Endothelial cell of umbilical vein (primary cell): ENCODE measurements at regions of chr6 and their contacts with region 1.

Region 1: GRCh38 chr6:141562851-141563763 is 569.6 kb upstream of the GJE1 start:
- DNase-seq: peak; percentile 97
- H3K4me3 ChIP-seq: peak overlapping the region in 2 of 3 experiments; percentile 23 to 59
- H3K27ac ChIP-seq: peak overlapping the region; percentile 86
- H3K4me1 ChIP-seq: peaks cover 17% of the 10 kb centered on the region
- H3K27me3 ChIP-seq: no peaks in the 10 kb centered on the region
- CTCF ChIP-seq: peak; percentile 57 to 69
- POLR2A ChIP-seq: no peak

Region 2: DNA sequence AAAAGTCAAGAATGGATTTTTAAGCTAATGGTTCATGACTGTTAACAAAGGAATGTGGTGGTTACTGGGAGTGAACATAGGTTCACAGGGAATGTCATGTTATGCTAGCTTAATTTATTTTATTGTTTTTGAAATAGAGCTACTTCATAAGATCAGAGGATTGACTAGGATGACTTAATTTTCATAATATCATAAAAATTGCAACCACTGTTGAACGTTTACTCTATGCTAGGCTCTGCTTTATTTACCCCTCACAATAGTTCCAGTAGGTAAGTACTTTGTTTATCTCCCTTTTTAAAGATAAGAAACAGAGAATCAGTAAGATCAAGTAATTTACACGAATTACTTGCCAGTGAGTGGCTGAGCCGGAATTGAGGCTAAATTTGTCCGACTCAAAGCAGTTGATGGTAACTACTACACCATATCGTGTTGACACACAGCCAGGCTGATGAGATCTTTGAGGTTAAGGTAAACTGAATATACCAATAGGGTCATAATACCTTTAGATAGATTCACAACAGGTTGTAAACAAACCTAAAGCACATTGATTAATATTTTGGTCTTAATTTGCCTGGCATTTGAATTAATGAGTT is 1994.1 kb before region 1 on chr6:
- CTCF ChIA-PET with region 1: no interaction called
- POLR2A ChIA-PET with region 1: no interaction called
- dilution Hi-C with region 1: no loop called
- intact Hi-C with region 1: loop called (anchors 10 kb)
- DNase-seq: peak; percentile 80
- H3K4me3 ChIP-seq: peak overlapping the region in 1 of 3 experiments; percentile 22
- H3K27ac ChIP-seq: peak overlapping the region; percentile 81
- H3K4me1 ChIP-seq: peaks cover 24% of the 10 kb centered on the region
- H3K27me3 ChIP-seq: no peaks in the 10 kb centered on the region
- CTCF ChIP-seq: no peak
- POLR2A ChIP-seq: no peak

Region 3: DNA sequence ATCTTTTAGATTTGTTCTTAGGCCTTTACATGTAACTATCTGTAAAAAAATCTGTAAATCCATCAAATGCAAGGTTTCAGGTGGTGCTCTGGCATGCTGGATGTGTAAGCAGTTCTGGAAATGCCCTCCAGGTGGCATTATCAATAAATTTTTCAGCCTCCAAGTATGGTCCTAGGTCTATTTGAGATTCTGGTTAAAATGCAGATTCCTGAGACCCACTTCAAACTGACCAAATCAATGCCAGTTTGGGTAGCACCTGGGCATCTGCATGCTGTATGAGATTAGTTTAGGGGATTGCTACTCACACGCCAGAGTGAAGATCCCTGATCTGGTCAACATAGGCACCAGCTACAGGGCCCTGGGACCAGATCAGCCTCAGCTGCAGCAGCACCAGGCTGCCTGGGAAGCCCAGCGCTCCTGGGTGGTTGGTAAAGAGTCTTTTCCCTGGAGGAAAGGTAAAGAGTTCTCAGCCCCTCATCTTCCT is 1681.3 kb before region 1 on chr6:
- CTCF ChIA-PET with region 1: no interaction called
- POLR2A ChIA-PET with region 1: no interaction called
- dilution Hi-C with region 1: no loop called
- intact Hi-C with region 1: loop called (anchors 1 kb)
- DNase-seq: peak; percentile 69
- H3K4me3 ChIP-seq: no peak overlapping the region
- H3K27ac ChIP-seq: no peak overlapping the region
- H3K4me1 ChIP-seq: peaks cover 14% of the 10 kb centered on the region
- H3K27me3 ChIP-seq: no peaks in the 10 kb centered on the region
- CTCF ChIP-seq: peak; percentile 42 to 49
- POLR2A ChIP-seq: no peak

Region 4: DNA sequence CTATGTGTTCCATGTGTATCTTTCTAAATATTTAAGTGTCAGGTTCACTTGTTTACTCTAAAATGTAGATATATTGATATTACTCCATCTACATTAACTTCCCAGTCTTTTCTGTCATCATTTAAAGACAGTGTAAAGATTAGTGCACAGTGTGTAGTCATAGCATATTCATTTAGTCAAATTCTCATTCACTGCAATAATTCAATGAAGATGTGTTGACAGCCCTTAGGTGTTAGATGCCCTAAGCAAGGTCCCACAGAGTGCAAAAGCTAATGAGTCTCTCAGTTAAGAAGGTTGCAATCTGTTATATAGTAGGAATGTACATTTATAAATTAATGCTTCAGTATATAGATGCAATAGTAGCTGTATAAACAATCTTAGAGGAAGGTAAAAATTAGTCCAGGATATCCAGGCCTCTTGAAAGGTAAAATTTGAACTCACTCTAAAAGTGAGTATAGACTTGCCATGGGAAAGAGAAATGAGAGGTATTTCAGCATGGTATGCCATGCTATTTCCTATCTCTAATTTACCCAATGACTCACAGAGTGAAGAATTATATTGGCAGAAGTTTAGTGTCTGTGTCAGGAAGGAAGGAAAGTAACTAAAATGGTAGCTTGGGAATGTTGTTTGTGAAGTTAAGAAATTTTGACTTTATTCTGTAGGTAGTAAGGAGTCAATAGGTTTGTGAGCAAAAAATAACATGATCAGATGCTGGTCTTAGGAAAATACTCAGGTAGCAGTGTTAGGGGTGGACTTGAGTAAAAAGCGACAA is 1218.8 kb before region 1 on chr6:
- CTCF ChIA-PET with region 1: no interaction called
- POLR2A ChIA-PET with region 1: no interaction called
- dilution Hi-C with region 1: no loop called
- intact Hi-C with region 1: loop called (anchors 1 kb)
- DNase-seq: peak; percentile 70
- H3K4me3 ChIP-seq: no peak overlapping the region
- H3K27ac ChIP-seq: peak overlapping the region; percentile 77
- H3K4me1 ChIP-seq: peaks cover 40% of the 10 kb centered on the region
- H3K27me3 ChIP-seq: no peaks in the 10 kb centered on the region
- CTCF ChIP-seq: no peak
- POLR2A ChIP-seq: peak; percentile 39

Region 5: GRCh38 chr6:140846503-140847261 is 716.4 kb before region 1 on chr6:
- CTCF ChIA-PET with region 1: no interaction called
- POLR2A ChIA-PET with region 1: no interaction called
- dilution Hi-C with region 1: no loop called
- intact Hi-C with region 1: loop called (anchors 5 kb)
- DNase-seq: peak; percentile 64
- H3K4me3 ChIP-seq: no peak overlapping the region
- H3K27ac ChIP-seq: peak overlapping the region; percentile 78
- H3K4me1 ChIP-seq: peaks cover 47% of the 10 kb centered on the region
- H3K27me3 ChIP-seq: no peaks in the 10 kb centered on the region
- CTCF ChIP-seq: no peak
- POLR2A ChIP-seq: no peak

Region 6: GRCh38 chr6:141451508-141452353 is 111.4 kb before region 1 on chr6:
- CTCF ChIA-PET with region 1: no interaction called
- POLR2A ChIA-PET with region 1: no interaction called
- dilution Hi-C with region 1: no loop called
- intact Hi-C with region 1: loop called (anchors 5 kb)
- DNase-seq: peak; percentile 50
- H3K4me3 ChIP-seq: no peak overlapping the region
- H3K27ac ChIP-seq: peak overlapping the region; percentile 47
- H3K4me1 ChIP-seq: peaks cover 20% of the 10 kb centered on the region
- H3K27me3 ChIP-seq: no peaks in the 10 kb centered on the region
- CTCF ChIP-seq: no peak
- POLR2A ChIP-seq: no peak